Activated naive CD4-positive, alpha-beta T cell treated with anti-CD3 and anti-CD28 coated beads for 36 hours (primary cell): ENCODE measurements at regions of chr20 and their contacts with region 1.

Region 1: GRCh38 chr20:25237610-25238318 is 10.1 kb upstream of the PYGB start:
- DNase-seq: peak; percentile 88
- H3K4me3 Mint-ChIP-seq: peak overlapping the region; percentile 42
- H3K27ac Mint-ChIP-seq: peak overlapping the region; percentile 92
- H3K4me1 Mint-ChIP-seq: peaks cover 25% of the 10 kb centered on the region
- H3K27me3 Mint-ChIP-seq: peaks cover 14% of the 10 kb centered on the region

Region 2: DNA sequence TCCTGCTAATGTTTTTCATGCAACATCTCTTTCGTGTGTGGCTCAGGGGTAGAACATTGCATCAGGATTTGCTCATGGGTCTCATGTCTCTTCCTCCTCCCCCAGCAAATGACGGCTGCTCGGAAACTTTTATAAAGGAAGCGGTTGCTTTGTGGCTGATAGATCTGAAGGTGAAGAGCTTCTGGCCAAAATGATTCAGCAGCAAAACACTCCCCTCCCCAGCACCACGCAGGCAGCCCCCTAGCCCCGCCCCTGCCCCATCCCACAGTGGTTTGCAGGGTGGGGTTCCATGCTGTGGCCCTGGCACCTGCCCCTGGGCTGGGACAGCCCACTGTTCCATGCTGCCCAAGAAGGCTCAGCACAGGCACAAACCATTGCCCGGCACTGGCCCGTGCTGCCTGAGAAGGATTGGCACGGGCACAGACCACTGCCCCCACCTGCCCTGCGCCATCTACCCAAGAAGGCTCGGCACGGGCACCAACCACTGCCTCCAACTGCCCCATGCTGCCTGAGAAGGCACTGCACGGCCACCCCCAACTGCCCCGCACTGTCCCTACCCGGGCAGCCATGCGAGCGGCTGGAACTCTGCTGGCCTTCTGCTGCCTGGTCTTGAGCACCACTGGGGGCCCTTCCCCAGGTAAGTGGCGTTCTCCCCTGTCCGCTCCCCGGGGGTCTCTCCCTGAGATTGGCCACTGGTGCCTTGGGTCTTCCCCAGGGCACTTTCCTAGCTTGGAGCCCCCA is 288.7 kb before region 1 on chr20 and contains the start of gene CST7:
- CTCF ChIA-PET with region 1: no interaction called
- intact Hi-C with region 1: loop called (anchors 2 kb)
- DNase-seq: peak; percentile 94
- H3K4me3 Mint-ChIP-seq: peak within 1 kb of the TSS; percentile 72
- H3K27ac Mint-ChIP-seq: peak within 1 kb of the TSS; percentile 96
- H3K4me1 Mint-ChIP-seq: peaks cover 40% of the 10 kb centered on the region
- H3K27me3 Mint-ChIP-seq: no peaks in the 10 kb centered on the region
- total RNA-seq, gene CST7: 37.8 to 43.1 TPM

Region 3: GRCh38 chr20:25160467-25160866 is 77.3 kb before region 1 on chr20:
- CTCF ChIA-PET with region 1: no interaction called
- intact Hi-C with region 1: loop called (anchors 1 kb)
- DNase-seq: no peak
- H3K4me3 Mint-ChIP-seq: no peak overlapping the region
- H3K27ac Mint-ChIP-seq: no peak overlapping the region
- H3K4me1 Mint-ChIP-seq: peaks cover 16% of the 10 kb centered on the region
- H3K27me3 Mint-ChIP-seq: peaks cover 5% of the 10 kb centered on the region

Region 4: GRCh38 chr20:25259788-25260254 is 22.1 kb after region 1 on chr20:
- CTCF ChIA-PET with region 1: interaction called, 3 read pairs
- intact Hi-C with region 1: loop called (anchors 1 kb)
- DNase-seq: peak; percentile 41
- H3K4me3 Mint-ChIP-seq: peak overlapping the region; percentile 23
- H3K27ac Mint-ChIP-seq: peak overlapping the region; percentile 65
- H3K4me1 Mint-ChIP-seq: peaks cover 48% of the 10 kb centered on the region
- H3K27me3 Mint-ChIP-seq: no peaks in the 10 kb centered on the region

Region 5: DNA sequence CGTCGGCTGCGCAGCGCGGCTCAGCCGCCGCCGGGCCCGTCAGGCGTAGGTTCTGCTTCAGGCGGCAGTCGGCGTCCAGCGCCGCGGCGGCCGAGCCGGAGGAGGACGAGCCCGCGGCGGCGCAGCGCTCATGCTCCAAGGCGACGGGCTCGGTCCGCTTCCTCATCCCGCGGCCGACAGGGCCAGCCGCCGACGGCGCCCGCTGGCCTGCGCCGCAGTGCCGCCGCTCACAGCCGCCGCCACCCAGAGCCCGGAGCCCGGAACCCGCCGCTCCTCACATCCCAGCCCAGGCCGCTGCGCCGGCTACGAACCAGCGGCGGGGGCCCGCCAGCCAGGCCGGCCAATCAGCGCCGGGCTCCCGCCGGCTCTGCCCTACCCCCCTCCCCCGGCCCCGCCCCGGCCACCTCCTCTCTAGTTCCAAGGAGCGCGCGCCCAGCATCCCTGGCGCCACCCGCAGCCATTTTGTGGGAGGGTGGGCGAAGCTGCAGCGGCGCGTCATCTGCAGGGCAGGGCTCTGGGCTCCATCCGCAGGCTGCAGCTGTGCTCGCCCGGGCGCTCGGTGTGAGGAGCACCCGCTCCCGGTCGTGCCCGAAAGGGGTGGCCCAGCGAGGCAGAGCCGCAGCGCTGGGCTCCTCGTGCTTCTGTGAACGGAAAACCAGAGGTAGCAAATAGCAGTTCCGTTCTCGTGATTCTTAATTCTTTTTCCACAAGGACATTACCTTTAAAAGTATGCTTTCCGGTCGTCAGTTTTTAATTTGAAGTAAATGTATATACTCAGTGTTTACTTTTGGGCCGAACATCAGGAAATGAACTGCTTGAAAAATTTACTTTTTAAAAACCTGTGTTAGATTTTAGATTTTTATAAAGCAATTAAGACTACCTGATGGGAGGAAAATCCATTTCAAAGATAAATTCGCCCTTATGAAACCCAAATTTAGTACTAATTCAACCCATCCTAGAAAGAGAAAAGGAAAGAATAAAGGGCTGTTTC is 153.1 kb after region 1 on chr20 and contains the start of gene ABHD12:
- CTCF ChIA-PET with region 1: no interaction called
- intact Hi-C with region 1: loop called (anchors 1 kb)
- DNase-seq: peak; percentile 97
- H3K4me3 Mint-ChIP-seq: peak within 1 kb of the TSS; percentile 87
- H3K27ac Mint-ChIP-seq: peak within 1 kb of the TSS; percentile 81
- H3K4me1 Mint-ChIP-seq: peaks cover 11% of the 10 kb centered on the region
- H3K27me3 Mint-ChIP-seq: no peaks in the 10 kb centered on the region
- total RNA-seq, gene ABHD12: 13.0 to 14.7 TPM

Region 6: DNA sequence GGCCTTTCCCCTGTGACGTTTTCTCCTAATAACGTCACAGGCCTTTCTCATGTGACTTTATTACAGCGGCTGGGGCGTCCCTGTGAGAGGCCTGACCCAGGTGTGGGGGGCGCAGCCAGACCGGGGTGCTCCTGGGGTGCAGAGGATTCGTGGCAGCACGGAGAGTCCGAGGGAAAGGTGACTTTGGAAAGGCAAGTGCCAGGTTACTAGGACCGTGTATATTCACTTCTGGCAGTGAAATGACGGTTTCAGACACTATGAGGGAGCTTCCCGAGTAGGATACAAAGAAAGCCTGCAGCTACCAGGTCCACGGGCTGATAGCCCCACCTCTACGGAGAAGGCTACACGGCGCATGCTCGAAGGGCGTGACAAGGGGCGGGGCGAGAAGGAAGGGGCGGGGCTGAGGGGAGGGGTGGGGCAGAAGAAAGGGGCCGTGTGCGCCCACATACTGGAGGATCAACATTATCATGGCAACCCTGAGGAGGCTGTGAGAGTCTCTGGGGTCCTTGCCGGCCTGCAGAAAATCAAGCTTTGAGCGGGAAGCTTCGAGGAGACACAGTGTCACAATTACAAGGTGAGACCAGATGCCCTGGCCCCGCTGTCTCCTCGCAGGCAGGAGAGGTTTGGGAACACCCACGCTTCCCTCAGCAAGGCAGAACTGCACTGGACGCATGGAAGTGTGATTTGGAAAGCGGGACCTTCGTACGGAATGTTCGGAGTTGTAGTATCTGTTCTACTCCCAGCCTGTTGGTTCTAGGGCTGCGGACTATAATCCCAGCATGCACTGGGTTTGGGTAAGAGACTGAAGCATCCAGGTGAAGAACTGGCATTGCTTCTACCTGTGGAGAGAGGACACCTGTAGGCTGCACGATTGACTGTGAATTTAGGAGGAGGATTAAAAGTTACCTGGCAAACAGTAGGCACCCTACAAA is 513.3 kb after region 1 on chr20:
- CTCF ChIA-PET with region 1: no interaction called
- intact Hi-C with region 1: loop called (anchors 5 kb)
- DNase-seq: peak; percentile 76
- H3K4me3 Mint-ChIP-seq: peak overlapping the region; percentile 86
- H3K27ac Mint-ChIP-seq: peak overlapping the region; percentile 77
- H3K4me1 Mint-ChIP-seq: peaks cover 15% of the 10 kb centered on the region
- H3K27me3 Mint-ChIP-seq: no peaks in the 10 kb centered on the region